AG04450 (cell line): ENCODE measurements at regions of chr7 and their contacts with region 1.

Region 1: GRCh38 chr7:20310963-20311742 is 19.5 kb upstream of the ITGB8 start:
- DNase-seq: no peak
- H3K4me3 ChIP-seq: no peak overlapping the region
- H3K27ac ChIP-seq: no peak overlapping the region
- H3K27me3 ChIP-seq: no peaks in the 10 kb centered on the region
- CTCF ChIP-seq: peak; percentile 48

Region 2: GRCh38 chr7:19713676-19714075 is 597.5 kb before region 1 on chr7:
- CTCF ChIA-PET with region 1: interaction called, 14 read pairs
- POLR2A ChIA-PET with region 1: no interaction called
- DNase-seq: peak; percentile 6
- H3K4me3 ChIP-seq: no peak overlapping the region
- H3K27ac ChIP-seq: no peak overlapping the region
- H3K27me3 ChIP-seq: no peaks in the 10 kb centered on the region
- CTCF ChIP-seq: peak; percentile 66

Region 3: DNA sequence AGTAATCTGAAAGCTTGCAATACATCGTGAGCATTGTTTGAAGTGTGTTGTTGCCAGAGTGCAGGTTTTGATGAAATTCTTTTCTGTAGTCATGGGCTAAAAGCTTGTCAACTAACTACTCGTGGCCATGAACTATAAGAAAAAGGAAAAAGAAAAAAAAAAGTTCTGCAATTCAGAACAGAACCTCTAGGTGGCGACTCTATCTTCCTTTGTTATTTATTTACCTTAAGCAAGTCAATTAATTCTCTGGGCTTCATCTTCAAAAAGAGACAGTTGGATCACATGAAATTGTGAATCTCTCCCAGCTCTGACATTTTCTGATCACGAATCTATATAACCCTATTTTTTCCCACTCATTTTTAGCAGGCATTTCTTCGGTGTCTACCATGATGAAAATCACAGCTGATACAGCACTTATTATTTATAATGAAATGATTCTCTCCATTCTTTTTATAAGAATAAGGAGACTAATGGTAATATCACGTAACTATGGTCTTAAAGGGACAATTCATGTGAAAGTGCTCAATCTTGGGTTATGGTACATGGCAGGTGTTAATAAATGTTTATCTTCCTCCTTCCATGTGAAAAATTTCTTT is 556.5 kb before region 1 on chr7:
- CTCF ChIA-PET with region 1: interaction called, 12 read pairs
- POLR2A ChIA-PET with region 1: no interaction called
- DNase-seq: no peak
- H3K4me3 ChIP-seq: no peak overlapping the region
- H3K27ac ChIP-seq: no peak overlapping the region
- H3K27me3 ChIP-seq: no peaks in the 10 kb centered on the region
- CTCF ChIP-seq: peak; percentile 74

Region 4: GRCh38 chr7:20158684-20159083 is 152.5 kb before region 1 on chr7:
- CTCF ChIA-PET with region 1: interaction called, 13 read pairs
- POLR2A ChIA-PET with region 1: no interaction called
- DNase-seq: no peak
- H3K4me3 ChIP-seq: no peak overlapping the region
- H3K27ac ChIP-seq: no peak overlapping the region
- H3K27me3 ChIP-seq: no peaks in the 10 kb centered on the region
- CTCF ChIP-seq: peak; percentile 35

Region 5: DNA sequence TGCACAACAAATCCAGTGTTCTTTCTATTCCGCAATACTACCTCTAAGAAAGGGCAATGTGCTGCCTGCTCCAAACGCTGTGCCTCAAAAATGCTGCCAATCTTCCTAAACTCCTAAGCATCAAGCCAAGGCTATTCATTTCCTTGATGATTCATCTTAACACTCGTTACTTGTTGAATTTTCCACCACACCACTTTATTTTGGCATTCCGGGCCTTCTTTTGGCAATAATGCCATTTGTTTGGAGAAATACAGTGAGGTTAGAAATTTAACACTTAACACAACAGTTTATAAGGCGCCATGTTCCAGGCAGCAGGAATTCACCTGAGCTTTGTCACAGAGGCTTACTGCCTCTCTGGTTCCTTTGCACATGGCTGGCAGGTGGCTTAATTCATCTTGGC is 221.7 kb after region 1 on chr7:
- CTCF ChIA-PET with region 1: no interaction called
- POLR2A ChIA-PET with region 1: no interaction called
- DNase-seq: no peak
- H3K4me3 ChIP-seq: no peak overlapping the region
- H3K27ac ChIP-seq: no peak overlapping the region
- H3K27me3 ChIP-seq: no peaks in the 10 kb centered on the region
- CTCF ChIP-seq: no peak

Region 6: DNA sequence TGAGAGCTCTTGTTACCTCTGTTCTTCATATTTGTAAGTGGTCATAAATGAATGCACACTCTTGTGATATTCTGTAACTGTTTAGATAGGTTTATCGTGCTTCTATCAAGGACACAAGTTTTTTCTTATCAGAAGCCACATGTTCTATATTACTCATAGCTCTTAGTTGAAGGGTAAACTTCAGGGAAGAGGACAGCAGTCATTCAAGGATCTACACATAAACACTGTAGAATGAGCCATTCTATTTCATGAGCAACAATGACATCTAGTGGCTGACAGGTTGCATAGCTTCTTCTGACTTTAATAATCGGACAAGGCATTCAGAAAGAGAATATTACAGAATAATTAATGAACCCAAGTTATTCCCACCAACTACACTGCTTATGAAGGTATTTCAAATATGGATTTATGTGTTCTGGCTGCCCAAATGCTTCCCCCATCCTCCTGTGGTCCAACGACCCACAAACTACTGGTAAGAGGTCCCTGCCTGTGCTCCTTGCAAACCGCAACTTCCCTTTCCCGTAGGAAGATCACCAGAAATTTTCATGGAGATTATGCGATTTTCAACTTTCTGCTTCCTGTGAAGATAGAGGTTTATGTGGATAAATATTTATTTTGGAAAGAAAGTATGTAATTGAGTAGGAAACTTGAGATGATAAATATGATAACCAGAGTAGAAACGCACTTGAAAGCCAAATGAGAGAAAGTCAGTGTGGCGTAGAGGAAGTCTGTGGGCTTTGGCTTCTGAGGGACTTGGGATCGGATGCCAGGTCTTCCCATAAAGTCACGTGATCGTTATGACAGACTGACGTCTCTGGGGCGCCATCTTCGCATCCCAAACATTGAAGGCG is 287.5 kb after region 1 on chr7:
- CTCF ChIA-PET with region 1: interaction called, 13 read pairs
- POLR2A ChIA-PET with region 1: no interaction called
- DNase-seq: peak; percentile 11
- H3K4me3 ChIP-seq: no peak overlapping the region
- H3K27ac ChIP-seq: no peak overlapping the region
- H3K27me3 ChIP-seq: no peaks in the 10 kb centered on the region
- CTCF ChIP-seq: peak; percentile 81